Gastrocnemius medialis (tissue), 4 donors: ENCODE measurements at regions of chr18 and their contacts with region 1.

Region 1: DNA sequence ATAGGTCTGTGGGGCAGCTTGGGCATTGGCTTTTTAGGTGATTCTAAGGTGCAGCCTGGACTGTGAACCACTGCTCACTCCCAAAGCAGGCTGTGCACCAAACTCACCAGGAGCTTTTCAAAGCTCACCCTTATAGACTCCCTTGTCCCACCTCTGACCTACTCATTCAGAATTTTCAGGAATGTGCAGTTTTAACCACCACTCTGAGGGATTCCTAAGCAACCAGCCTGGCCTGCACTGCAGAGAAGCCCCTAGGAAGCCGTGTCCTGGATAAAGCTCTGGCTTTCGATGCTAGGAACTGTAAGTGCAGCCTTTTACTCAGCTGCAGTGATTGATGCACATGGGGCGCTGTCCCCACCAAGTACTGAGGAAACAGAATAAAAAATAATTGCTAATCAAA is 33.0 kb downstream of the MRO start:
- DNase-seq: no peak
- ATAC-seq: no peak
- H3K4me3 ChIP-seq: no peak overlapping the region
- H3K27ac ChIP-seq: no peak overlapping the region
- H3K4me1 ChIP-seq: no peaks in the 10 kb centered on the region
- H3K27me3 ChIP-seq: no peaks in the 10 kb centered on the region
- CTCF ChIP-seq: no peak
- POLR2A ChIP-seq: no peak

Region 2: DNA sequence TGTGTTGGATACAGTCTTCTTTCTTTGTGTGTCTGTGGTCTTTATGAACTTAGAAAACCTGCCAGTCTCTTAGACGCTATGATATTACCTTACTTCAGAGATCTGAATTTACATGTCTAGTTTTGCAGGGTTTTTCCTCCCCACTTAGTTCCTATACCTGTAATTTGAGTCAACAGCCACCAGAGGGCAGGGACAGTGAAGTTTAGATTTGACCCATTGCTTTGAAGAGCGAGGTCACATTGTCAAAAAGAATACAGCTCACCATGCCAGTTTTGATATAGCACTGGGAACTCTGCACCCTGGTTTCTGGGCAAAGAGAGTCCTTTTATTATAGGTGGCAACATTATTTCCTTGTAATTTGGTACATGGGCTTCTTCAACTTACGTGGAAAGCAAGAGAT is 124.7 kb before region 1 on chr18:
- in situ Hi-C with region 1: no loop called
- intact Hi-C with region 1: loop called (anchors 10 kb)
- DNase-seq: no peak
- ATAC-seq: no peak
- H3K4me3 ChIP-seq: no peak overlapping the region
- H3K27ac ChIP-seq: no peak overlapping the region
- H3K4me1 ChIP-seq: peaks cover 33 to 50% of the 10 kb centered on the region in 2 donors
- H3K27me3 ChIP-seq: no peaks in the 10 kb centered on the region
- CTCF ChIP-seq: peak in 1 of 5 experiments; percentile 36
- POLR2A ChIP-seq: no peak

Region 3: GRCh38 chr18:50878345-50879301 is 91.8 kb after region 1 on chr18 and contains the start of gene ME2:
- in situ Hi-C with region 1: no loop called
- intact Hi-C with region 1: no loop called
- DNase-seq: peak; percentile 83 to 88
- ATAC-seq: peak; percentile 87 to 91
- H3K4me3 ChIP-seq: peak within 1 kb of the TSS; percentile 80 to 96 (median 89)
- H3K27ac ChIP-seq: peak within 1 kb of the TSS; percentile 88 to 97 (median 94)
- H3K4me1 ChIP-seq: peaks cover 10 to 17% of the 10 kb centered on the region in 2 donors
- H3K27me3 ChIP-seq: no peaks in the 10 kb centered on the region
- CTCF ChIP-seq: peak in 1 of 5 experiments; percentile 5
- POLR2A ChIP-seq: peak; percentile 94 to 98
- total RNA-seq, gene ME2: 25.3 to 50.6 (median 46.5) TPM